Posterior vena cava (tissue), 2 donors: ENCODE measurements at regions of chr2 and their contacts with region 1.

Region 1: DNA sequence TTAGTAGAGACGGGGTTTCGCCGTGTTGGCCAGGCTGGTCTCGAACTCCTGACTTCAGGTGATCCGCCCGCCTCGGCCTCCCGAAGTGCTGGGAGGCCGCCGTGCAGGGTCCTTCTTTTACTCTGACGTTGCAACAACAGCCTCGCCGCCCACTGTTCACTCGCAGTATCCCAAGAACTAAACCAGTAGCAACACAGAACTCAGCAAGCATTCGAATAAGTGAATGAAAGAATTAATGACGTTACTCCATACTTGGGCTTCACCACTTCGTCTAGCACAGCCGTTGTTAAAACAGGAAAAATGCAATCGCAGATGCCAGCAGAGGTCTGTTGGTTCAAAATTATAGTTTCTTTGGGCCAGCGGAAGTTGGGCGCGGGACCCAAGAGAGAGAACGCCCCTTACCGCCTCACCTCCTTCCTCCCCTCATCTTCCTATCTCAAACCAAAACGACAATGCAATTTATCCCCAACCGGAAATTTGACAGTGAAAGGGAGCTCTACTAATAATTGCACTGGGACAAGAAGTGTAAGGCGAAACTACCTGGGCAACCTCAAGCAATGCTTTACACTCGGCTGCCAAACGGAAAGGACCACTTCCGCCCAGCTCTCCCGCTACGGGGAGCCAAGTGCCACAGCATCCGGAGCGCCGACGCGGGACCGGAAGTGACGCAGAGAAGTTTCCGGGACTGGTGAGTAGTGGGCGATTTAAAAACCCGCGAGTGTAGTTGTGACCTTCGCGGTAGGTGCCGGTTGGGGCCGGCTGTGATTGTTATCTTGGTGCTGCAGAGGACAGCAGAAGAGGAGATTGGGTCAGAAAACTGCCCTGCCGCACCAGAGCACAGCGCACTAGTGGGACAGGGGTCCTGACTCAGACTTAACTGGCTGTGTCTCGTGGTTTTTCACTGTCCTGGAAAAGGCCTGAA is at the starts of genes NIF3L1 and PPIL3:
- DNase-seq: peak; percentile 99
- total RNA-seq, gene NIF3L1: 19.0 to 19.1 TPM
- total RNA-seq, gene PPIL3: 18.0 to 20.6 TPM

Region 2: GRCh38 chr2:198913394-198914152 is 1975.4 kb before region 1 on chr2:
- intact Hi-C with region 1: no loop called
- DNase-seq: no peak

Region 3: GRCh38 chr2:199505755-199506403 is 1383.1 kb before region 1 on chr2:
- intact Hi-C with region 1: no loop called
- DNase-seq: no peak

Region 4: DNA sequence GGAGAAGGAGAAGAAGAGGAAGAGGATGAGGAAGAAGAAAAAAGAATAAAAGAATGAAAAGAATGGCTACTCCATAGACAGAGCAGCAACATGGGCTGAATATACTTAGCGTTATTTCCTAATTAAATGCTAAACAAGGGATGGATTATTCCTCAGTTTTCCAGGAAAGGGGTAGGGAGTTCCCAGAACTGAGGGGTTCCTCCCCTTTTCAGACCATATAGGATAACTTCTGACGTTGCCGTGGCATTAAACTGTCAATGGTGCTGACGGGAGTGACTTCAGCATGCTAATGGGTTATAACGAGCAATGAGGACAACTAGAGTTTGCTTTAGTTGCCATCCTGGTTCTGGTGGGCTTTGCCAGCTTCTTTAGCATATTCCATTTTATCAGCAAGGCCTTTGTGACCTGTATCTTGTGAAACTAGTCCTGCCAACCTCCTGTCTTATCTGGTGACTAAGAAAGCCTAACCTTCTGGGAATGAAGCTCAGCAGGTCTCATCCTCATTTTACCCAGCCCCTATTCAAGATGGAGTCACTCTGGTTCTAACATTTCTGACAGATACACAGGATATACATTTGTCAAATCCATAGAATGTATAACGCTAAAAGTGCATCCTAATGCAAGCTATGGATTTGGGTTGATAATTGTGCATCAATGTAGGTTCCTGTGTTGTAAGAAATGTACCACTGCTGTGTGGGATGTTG is 781.3 kb before region 1 on chr2:
- intact Hi-C with region 1: loop called in 1 of 2 experiments (anchors 5 kb)
- DNase-seq: no peak

Region 5: DNA sequence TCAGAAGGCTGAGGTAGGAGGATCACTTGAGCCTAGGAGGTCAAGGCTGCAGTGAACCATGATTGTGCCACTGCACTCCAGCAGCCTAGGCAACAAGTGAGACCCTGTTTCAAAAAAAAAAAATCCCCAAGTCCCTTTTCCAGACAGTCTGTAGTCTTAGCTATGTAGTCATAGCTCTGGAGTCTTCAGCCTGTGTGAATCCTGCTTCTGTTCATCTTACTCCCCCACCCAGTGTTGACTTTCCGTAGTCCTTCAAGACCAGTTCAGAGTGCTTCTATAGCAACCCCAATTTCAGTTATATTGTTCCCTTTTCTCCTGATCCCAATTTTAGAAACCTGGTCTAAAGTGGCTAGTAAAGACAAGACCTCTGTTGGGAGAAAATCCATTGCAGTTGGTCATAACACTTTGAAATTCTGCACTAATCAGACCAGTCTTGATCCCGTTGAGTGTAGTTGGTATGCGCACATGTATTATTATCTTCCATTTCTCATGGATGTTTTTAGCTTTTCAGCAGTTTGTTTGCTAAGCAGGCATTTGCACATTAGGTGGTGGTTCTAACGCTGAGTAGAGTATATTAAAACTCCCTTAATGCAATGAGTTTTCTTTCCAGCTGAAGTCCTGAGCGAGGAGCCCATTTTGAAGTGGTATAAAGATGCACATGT is 68.3 kb before region 1 on chr2:
- intact Hi-C with region 1: no loop called
- DNase-seq: no peak

Region 6: DNA sequence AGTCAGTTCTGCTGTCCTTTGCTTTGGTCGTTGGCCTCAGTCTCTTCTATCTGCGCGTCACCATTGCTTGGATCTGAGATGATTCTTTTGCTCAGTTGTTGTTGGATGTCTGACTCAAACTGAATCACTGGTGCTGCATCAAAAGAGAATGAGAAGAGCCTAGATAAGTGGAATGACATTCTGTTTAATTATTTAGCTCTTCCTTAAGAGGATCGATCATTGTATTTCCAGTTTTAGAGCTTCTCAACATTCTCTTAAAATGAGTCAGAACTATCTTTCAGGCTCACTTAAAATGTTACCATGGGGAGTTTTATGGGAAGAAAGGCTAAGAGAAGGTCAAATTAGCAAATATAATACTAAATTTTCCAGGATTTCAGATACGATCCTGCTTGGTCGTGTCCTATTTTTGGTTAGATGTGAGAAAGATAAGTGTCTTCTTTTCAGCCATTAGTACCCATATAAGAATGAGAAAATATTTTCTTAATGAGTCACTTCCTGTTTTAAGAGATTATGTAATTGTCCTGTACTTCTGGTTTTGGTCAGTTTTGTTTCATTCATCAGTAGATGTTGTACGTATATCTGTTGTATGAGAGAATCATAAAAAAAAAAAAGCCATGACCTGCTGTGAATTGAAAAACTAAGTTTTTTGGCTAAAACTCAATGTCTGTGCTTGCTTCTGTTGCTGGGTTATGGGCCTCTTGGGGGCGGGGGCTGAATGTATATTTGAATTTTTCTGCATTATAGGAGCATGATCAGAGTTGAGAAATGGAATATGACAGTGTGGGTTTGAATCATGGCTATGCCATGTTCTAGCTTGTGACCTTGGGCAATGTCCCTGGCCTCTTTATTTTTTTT is 262.4 kb after region 1 on chr2:
- intact Hi-C with region 1: no loop called
- DNase-seq: no peak